H1 (cell line): ENCODE measurements at regions of chr4 and their contacts with region 1.

Region 1: DNA sequence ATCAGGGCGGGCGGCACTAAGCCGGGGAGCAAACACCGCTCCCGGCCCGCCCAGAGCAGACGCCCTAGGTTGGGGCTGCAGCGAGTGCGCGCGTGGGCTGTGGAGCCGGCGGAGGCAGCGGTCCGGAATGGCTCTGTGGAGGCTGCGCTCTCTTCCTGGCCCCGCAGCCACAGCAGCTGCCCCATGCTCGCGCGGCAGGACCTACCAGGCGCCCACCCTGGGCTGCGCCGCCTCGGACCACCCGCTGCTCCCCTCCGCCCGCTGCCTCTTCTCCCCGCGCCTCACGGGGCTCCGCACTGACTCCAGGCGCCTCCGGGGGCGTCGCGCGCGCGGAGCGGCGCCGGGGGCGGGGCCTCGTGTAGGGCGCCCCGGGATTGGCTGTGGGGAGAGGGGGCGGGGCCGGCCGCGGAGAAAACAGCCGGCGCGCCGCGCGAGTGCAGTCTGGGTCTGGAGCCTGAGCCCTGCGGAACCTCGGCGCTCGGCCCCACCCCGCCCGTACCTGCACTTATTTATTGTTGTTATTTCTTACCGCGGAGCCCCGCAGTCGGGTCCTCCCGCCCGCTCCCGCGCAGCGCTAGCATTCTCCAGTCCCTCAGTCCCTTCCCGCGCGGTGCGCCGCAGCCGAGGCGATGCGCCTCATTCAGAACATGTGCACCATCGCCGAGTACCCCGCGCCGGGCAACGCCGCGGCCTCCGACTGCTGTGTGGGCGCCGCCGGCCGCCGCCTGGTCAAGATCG is at the start of gene RASL11B:
- DNase-seq: peak in 1 of 2 experiments; percentile 92
- H3K4me3 ChIP-seq: peak within 1 kb of the TSS; percentile 79 to 97 (median 88)
- H3K27ac ChIP-seq: peak within 1 kb of the TSS; percentile 83
- H3K4me1 ChIP-seq: peaks cover 10 to 31% (median 11%) of the 10 kb centered on the region in 4 experiments
- H3K27me3 ChIP-seq: no peaks in the 10 kb centered on the region; a peak in 1 of 7 replicates
- CTCF ChIP-seq: peak in 1 of 3 experiments; percentile 2; a peak in 1 of 4 replicates
- EP300 ChIP-seq: no peak
- POLR2A ChIP-seq: peak; percentile 91 to 92
- RAD21 ChIP-seq: peak in 1 of 2 experiments; percentile 38; a peak in 2 of 4 replicates
- total RNA-seq, gene RASL11B: 71.4 and 75.5 TPM in 2 replicates

Region 2: DNA sequence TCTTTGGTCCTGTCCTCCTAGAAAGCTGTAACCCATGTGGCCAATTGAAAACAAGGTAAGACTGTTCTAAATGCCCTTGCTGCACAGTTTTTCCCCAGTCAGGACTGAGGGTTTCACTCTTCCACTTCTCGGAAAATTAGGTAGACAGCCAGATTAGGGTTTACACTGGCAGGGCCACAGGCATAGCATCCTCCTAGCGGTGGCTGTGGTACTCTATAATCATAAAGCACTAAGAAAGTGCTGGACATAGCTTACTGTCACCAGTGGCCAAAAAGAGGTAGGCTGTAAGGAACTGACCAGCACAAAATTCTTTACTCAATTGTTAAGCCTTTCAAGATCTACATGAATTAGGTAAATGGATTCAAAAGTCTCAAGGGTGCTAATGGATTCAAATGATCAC is 191.3 kb before region 1 on chr4:
- CTCF ChIA-PET with region 1: no interaction called
- POLR2A ChIA-PET with region 1: no interaction called
- DNase-seq: no peak
- H3K4me3 ChIP-seq: no peak overlapping the region
- H3K27ac ChIP-seq: no peak overlapping the region
- H3K4me1 ChIP-seq: no peaks in the 10 kb centered on the region
- H3K27me3 ChIP-seq: no peaks in the 10 kb centered on the region
- CTCF ChIP-seq: no peak
- EP300 ChIP-seq: no peak
- POLR2A ChIP-seq: no peak
- RAD21 ChIP-seq: no peak

Region 3: DNA sequence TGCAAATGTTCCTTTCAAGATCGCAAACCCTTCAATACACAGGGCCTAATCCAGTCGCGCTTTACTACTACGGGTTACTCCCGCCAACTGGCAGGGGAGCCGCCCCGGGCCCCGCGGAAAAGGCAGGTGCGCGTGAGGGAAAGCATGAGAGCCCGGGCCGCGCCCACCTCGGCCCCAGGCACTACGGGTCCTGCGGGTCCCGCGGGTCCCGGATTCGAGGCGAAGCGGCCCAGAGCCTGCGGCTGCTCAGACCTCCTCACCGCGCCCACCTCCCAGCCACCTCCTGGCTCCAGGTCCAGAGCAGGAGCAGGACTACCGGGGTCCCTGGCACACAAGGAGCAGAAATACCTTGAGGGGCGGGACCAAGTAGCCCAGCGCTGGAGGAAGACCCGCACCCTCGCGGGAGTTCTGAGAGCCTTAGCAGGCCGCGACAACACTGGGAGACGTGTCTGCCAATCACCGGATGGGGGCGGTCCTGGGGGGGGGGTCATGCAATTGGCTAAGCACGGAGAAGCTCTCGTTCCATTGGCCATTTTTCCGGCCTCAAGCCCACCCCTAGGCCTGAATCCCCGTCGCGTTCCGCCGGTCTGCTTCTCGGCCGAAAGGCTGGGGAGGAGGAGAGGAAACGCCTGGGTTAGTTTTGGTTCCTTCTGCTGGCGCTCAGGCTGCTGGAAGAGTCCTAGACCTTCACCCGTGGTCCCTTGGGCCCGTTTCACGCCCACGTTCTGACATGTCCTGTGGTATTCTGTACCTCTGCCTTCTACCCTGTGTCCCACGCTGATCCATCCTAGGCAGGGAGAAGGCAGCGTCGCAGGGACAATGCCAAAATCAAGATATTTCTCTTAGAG is 139.9 kb before region 1 on chr4:
- CTCF ChIA-PET with region 1: interaction called, 4 read pairs
- POLR2A ChIA-PET with region 1: interaction called, 21 read pairs
- DNase-seq: peak; percentile 92 to 98
- H3K4me3 ChIP-seq: peak overlapping the region; percentile 38 to 59 (median 52)
- H3K27ac ChIP-seq: peak overlapping the region; percentile 49; the same call in 1 of the 2 replicates
- H3K4me1 ChIP-seq: peaks cover 0 to 5% (median 1%) of the 10 kb centered on the region in 4 experiments; a peak in 3 of 7 replicates
- H3K27me3 ChIP-seq: no peaks in the 10 kb centered on the region
- CTCF ChIP-seq: no peak
- EP300 ChIP-seq: 0 out of 3 replicates have a peak, but pooled peaks of 1 of the 2 experiments have one; percentile 4
- POLR2A ChIP-seq: peak; percentile 97 to 99
- RAD21 ChIP-seq: peak; percentile 1 to 3; a peak in 2 of 4 replicates

Region 4: DNA sequence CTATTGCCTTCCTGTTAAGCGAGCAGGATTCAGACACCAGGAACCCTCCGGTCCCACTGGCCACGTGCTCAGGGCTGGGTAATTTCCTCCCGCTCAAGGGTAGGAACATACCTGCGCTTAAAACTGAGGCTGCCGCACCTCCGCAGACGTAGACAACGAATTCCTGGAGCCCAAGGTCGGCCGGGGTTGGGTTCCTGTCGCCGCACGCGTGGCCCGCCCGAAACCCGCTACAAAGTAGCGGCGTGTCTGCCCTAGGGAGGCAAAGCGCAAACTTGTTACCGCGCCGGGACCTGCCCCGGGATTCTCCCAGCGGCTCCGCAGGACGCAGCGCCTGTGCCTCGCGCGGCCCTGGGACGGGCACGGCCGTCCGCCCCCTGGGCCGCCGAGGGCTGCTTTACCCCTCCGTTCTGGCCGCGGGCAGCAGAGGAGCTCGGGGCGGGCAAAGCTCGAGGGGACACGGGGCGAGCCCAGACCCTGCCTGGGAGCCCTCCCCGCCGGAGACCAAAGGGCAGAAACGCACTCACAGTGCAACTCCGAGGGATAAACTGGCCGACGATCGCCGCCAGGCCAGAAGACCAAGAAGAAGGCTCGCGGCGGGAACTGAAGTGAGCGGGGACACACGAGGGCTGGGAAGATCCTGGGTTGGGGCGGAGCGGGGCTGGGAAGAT is 111.1 kb before region 1 on chr4 and contains the start of gene ERVMER34-1:
- CTCF ChIA-PET with region 1: no interaction called
- POLR2A ChIA-PET with region 1: interaction called, 25 read pairs
- DNase-seq: peak; percentile 1 to 77
- H3K4me3 ChIP-seq: peak within 1 kb of the TSS; percentile 17 to 63 (median 25); a peak in 7 of 8 replicates
- H3K27ac ChIP-seq: peak within 1 kb of the TSS; percentile 14; the same call in 1 of the 2 replicates
- H3K4me1 ChIP-seq: no peaks in the 10 kb centered on the region; a peak in 1 of 7 replicates
- H3K27me3 ChIP-seq: peaks cover 0 to 18% (median 13%) of the 10 kb centered on the region in 4 experiments; a peak in 6 of 7 replicates
- CTCF ChIP-seq: no peak
- EP300 ChIP-seq: no peak
- POLR2A ChIP-seq: no peak
- RAD21 ChIP-seq: 0 out of 4 replicates have a peak, but pooled peaks of 1 of the 2 experiments have one; percentile 2
- total RNA-seq, gene ERVMER34-1: 31.6 and 34.3 TPM in 2 replicates

Region 5: GRCh38 chr4:52824603-52825459 is 37.2 kb before region 1 on chr4:
- CTCF ChIA-PET with region 1: interaction called, 4 read pairs
- POLR2A ChIA-PET with region 1: interaction called, 26 read pairs
- DNase-seq: no peak
- H3K4me3 ChIP-seq: no peak overlapping the region
- H3K27ac ChIP-seq: no peak overlapping the region
- H3K4me1 ChIP-seq: no peaks in the 10 kb centered on the region
- H3K27me3 ChIP-seq: no peaks in the 10 kb centered on the region
- CTCF ChIP-seq: no peak
- EP300 ChIP-seq: no peak
- POLR2A ChIP-seq: no peak
- RAD21 ChIP-seq: no peak

Region 6: GRCh38 chr4:52837726-52838558 is 24.1 kb before region 1 on chr4:
- CTCF ChIA-PET with region 1: interaction called, 6 read pairs
- POLR2A ChIA-PET with region 1: interaction called, 165 read pairs
- DNase-seq: no peak
- H3K4me3 ChIP-seq: no peak overlapping the region
- H3K27ac ChIP-seq: no peak overlapping the region
- H3K4me1 ChIP-seq: peaks cover 7 to 25% (median 17%) of the 10 kb centered on the region in 4 experiments
- H3K27me3 ChIP-seq: no peaks in the 10 kb centered on the region
- CTCF ChIP-seq: no peak
- EP300 ChIP-seq: no peak
- POLR2A ChIP-seq: no peak
- RAD21 ChIP-seq: no peak

Region 7: GRCh38 chr4:52877036-52877435 is 15.0 kb after region 1 on chr4:
- CTCF ChIA-PET with region 1: interaction called, 4 read pairs
- POLR2A ChIA-PET with region 1: interaction called, 43 read pairs
- DNase-seq: no peak
- H3K4me3 ChIP-seq: no peak overlapping the region
- H3K27ac ChIP-seq: no peak overlapping the region
- H3K4me1 ChIP-seq: peaks cover 6 to 29% (median 20%) of the 10 kb centered on the region in 4 experiments
- H3K27me3 ChIP-seq: no peaks in the 10 kb centered on the region; a peak in 1 of 7 replicates
- CTCF ChIP-seq: no peak
- EP300 ChIP-seq: no peak
- POLR2A ChIP-seq: no peak
- RAD21 ChIP-seq: no peak

Region 8: GRCh38 chr4:52946855-52947254 is 84.8 kb after region 1 on chr4:
- CTCF ChIA-PET with region 1: no interaction called
- POLR2A ChIA-PET with region 1: no interaction called
- DNase-seq: no peak
- H3K4me3 ChIP-seq: no peak overlapping the region
- H3K27ac ChIP-seq: no peak overlapping the region
- H3K4me1 ChIP-seq: peaks cover 0 to 6% (median 3%) of the 10 kb centered on the region in 4 experiments; a peak in 3 of 7 replicates
- H3K27me3 ChIP-seq: no peaks in the 10 kb centered on the region
- CTCF ChIP-seq: no peak
- EP300 ChIP-seq: no peak
- POLR2A ChIP-seq: no peak
- RAD21 ChIP-seq: no peak

Region 9: DNA sequence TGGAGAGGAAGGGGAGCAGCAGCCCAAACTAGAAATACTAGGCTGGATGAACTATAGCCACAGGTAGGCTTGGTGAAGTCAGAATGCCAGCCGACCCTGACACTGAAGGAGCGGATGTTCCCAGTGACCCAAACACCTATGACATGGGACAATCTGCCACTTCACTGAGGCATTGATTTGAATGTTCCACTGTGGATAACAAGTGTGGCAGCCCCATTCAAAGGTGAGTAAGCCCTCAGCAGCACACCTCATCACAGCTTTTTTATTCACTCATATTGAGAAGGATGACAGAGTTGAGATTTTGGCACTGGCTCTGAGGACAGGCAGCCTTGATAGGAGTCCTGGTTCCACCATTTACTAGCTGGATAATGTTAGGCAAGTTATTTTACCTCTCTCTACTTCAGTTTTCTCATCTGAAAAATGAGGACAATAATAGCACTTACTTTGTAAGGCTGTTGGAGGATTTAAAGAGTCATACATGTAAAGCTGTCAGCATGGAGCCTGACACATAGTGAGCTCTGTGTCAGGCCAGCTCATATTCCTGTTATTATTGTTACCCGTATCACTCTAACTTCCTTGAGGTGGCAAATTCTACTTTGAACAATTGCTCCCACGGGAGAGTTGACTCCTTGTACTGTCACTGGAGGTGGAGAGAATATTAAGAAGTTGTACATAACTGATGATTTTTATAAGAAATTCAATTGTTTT is 114.6 kb after region 1 on chr4:
- CTCF ChIA-PET with region 1: interaction called, 5 read pairs
- POLR2A ChIA-PET with region 1: interaction called, 11 read pairs
- DNase-seq: no peak
- H3K4me3 ChIP-seq: no peak overlapping the region
- H3K27ac ChIP-seq: no peak overlapping the region
- H3K4me1 ChIP-seq: peaks cover 0 to 3% (median 0%) of the 10 kb centered on the region in 4 experiments; a peak in 1 of 7 replicates
- H3K27me3 ChIP-seq: no peaks in the 10 kb centered on the region
- CTCF ChIP-seq: no peak
- EP300 ChIP-seq: no peak
- POLR2A ChIP-seq: no peak
- RAD21 ChIP-seq: no peak

Region 10: GRCh38 chr4:53313510-53313909 is 451.5 kb after region 1 on chr4:
- CTCF ChIA-PET with region 1: no interaction called
- POLR2A ChIA-PET with region 1: no interaction called
- DNase-seq: no peak
- H3K4me3 ChIP-seq: no peak overlapping the region
- H3K27ac ChIP-seq: no peak overlapping the region
- H3K4me1 ChIP-seq: 0 out of 7 replicates have a peak, but pooled peaks cover 0 to 2% (median 0%) of the 10 kb centered on the region in 4 experiments
- H3K27me3 ChIP-seq: no peaks in the 10 kb centered on the region
- CTCF ChIP-seq: peak; percentile 7 to 66 (median 58)
- EP300 ChIP-seq: no peak
- POLR2A ChIP-seq: no peak
- RAD21 ChIP-seq: peak; percentile 78 to 84